H1 (cell line): ENCODE measurements at regions of chr15 and their contacts with region 1.

Region 1: DNA sequence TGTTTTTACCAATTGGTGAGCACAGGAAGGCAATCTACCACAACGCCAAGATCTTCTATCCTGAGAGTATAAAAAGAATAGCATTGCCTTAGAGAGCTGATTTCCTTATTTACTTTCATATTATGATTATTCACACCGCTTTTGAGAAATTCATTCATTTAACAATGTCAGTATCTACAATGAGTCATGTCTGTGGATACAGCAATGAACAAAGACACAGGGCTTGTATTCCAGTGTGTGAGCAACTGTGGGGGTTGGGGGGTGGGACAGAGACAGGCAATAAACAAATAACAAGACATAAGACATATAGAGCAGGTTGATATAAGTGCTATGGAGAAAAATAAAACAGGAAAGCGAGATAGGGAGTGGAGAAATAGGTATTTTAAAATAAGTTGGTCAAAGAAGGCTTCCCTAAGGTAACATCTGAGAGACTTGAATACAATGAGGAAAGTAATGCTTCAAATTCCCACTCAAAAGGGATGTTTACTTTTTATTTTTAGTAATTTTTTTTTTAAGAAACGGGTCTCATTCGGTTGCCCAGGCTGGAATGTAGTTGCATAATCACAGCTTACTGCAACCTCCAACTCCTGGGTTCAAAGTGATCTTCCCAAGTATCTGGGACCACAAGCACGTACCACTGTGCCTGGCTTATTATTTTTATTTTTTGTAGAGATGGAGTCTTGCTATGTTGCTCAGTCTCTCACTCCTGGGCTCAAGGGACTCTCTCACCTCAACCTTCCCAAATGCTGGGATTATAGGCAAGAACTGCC is 45.7 kb downstream of the PGBD4 start:
- DNase-seq: no peak
- H3K4me3 ChIP-seq: no peak overlapping the region
- H3K27ac ChIP-seq: no peak overlapping the region
- H3K4me1 ChIP-seq: no peaks in the 10 kb centered on the region
- H3K27me3 ChIP-seq: no peaks in the 10 kb centered on the region
- CTCF ChIP-seq: no peak
- EP300 ChIP-seq: no peak
- POLR2A ChIP-seq: no peak
- RAD21 ChIP-seq: no peak

Region 2: DNA sequence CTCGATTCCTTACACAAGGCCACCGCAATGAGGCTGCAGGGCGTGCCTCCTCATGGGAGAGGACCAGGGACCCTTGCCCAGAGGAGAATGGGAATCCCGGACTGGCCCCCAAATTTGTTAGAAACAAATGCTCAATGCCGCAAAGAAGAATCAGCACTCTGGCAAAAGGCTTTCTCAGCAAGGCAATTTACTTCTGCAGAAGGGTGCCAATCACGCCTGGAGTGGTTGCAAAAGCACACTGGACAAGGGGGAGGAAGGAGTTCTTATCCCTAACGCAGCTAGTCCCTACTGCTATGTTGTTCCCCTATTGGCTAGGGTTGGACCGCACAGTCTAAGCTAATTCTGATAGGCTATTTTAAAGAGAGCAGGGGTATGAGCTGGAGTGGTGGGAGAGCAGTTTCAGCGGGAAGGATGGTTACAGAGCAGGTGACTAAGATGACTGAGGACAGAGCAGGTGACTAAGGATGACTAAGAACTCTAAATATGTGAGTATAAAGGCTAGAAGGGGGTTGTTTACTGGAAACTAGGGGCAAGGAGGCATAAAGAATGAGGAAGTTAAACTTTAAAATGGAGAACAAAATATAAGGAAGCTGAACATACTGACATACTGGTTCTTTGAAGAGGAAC is 13.9 kb after region 1 on chr15:
- CTCF ChIA-PET with region 1: interaction called, 15 read pairs
- POLR2A ChIA-PET with region 1: no interaction called
- DNase-seq: no peak
- H3K4me3 ChIP-seq: no peak overlapping the region
- H3K27ac ChIP-seq: no peak overlapping the region
- H3K4me1 ChIP-seq: peaks cover 0 to 19% (median 9%) of the 10 kb centered on the region in 4 experiments; a peak in 5 of 7 replicates
- H3K27me3 ChIP-seq: no peaks in the 10 kb centered on the region
- CTCF ChIP-seq: no peak
- EP300 ChIP-seq: no peak
- POLR2A ChIP-seq: no peak
- RAD21 ChIP-seq: no peak